AG04449 (cell line): ENCODE measurements at regions of chr12 and their contacts with region 1.

Region 1: DNA sequence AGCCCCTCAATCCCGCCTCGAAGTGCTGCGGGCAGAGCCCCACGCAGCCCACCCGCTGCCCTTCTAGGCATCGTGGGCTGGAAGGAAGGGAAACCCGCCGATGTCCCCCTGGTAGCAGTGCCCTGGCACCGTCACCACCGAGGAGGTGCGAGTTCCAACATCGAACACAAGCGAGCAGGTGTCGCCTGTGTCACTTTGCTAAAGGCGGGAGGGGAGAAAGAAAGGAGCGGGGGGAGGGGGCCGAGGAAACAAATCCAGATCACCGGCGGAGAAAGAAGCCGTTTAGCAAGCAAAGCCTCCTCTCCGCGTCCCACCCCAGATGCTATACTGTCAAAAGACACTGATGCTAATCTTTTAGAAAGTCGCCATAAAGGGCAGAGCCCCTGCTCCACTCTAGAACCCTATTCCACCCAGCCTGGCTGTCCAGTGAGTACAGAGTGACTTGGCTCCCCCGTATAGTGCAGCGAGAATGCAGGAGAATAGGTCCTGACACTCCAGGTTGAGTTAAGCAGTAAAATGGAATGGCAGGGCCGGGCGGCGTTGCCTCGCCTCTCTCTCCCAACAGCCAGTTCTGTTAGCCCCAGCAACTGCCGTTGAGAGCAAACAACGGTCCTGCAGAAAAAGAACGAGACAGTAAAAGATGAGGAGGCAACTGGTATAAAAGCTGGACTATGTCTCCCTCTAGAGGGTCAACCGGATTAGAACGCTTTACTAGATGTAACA is 67.9 kb upstream of the USP15 start:
- DNase-seq: peak; percentile 26
- H3K4me3 ChIP-seq: peak overlapping the region; percentile 47
- CTCF ChIP-seq: peak; percentile 63

Region 2: DNA sequence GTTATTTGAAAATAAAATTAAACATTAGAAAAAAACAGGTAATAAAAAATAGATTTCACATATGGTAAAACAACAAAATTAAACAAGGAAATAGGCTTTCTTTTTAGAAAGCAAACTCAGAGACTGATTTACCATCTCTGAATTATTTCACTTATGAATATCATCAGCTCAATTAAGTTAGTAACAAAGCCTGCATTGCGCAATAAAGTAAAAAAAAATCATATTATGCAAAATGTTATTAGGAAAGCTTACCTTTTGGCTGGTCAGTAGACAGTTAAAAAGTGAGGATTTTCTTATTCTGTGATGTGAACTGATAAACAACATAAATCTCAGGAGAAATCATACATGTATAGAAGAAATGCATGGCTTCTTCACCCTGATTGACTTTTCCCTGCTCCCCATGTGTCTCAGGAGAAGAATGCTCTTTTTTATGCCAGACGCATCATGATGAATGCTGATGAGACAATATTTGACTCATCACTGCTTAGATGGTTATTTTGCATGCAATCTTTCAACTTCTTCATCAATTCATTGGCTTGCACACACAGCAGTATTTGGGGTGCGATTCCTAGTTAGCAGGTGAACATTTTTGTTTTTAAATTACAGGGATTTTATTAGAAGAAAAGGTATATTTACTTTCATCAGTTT is 56.7 kb before region 1 on chr12:
- CTCF ChIA-PET with region 1: no interaction called
- POLR2A ChIA-PET with region 1: no interaction called
- DNase-seq: no peak
- H3K4me3 ChIP-seq: no peak overlapping the region
- CTCF ChIP-seq: no peak

Region 3: DNA sequence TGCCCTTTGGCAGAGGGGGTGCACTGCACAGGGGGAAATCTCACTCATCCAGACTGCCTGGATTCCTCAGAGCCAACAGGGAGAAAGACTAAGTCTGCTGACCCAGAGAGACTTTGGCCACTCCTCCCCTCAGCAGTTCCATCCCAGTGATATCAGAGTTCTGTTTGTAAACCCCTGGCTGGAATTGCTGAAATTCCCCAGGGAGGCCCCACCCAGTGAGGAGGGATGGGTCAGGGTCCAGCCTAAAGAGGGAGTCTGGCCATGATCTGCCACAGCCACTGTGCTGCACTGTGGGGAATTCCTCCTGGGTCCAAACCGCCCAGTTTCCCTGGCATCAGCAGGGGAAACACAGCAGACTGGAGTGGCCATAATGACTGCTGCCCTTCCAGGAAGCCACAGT is 13.0 kb after region 1 on chr12:
- CTCF ChIA-PET with region 1: interaction called, 16 read pairs
- POLR2A ChIA-PET with region 1: no interaction called
- DNase-seq: no peak
- H3K4me3 ChIP-seq: no peak overlapping the region
- CTCF ChIP-seq: no peak

Region 4: GRCh38 chr12:62210422-62210821 is 18.1 kb after region 1 on chr12:
- CTCF ChIA-PET with region 1: interaction called, 16 read pairs
- POLR2A ChIA-PET with region 1: no interaction called
- DNase-seq: no peak
- H3K4me3 ChIP-seq: no peak overlapping the region
- CTCF ChIP-seq: peak; percentile 77